GM12878 (cell line): ENCODE measurements at regions of chr1 and their contacts with region 1.

Region 1: GRCh38 chr1:198937231-198938031 is 298.6 kb downstream of the PTPRC start:
- DNase-seq: peak; percentile 91
- ATAC-seq: peak; percentile 85
- H3K4me3 ChIP-seq: peak overlapping the region; percentile 62
- H3K27ac ChIP-seq: peak overlapping the region; percentile 29
- H3K4me1 ChIP-seq: no peaks in the 10 kb centered on the region; the same call in 1 of the 2 replicates
- H3K27me3 ChIP-seq: no peaks in the 10 kb centered on the region
- CTCF ChIP-seq: no peak
- EP300 ChIP-seq: no peak
- POLR2A ChIP-seq: peak; percentile 87
- RAD21 ChIP-seq: no peak

Region 2: DNA sequence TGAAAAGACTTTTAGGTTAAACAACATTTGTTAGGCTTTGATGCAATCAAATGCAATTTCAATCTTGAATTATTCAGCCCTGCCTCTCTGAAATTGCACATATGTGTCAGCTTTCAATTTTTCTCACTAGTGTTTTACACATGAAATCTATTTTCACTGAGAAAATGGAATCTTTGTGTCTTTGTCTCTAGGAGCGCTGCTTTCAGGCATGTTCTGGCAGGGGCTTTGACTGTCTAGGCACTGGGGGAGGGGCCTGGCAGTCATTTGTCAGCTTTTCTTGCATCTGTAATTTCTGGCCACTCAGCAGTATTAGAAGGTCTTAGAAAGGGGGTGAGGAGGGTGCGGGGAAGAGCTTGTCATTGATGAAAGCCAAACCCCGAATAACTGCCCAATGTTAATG is 34.2 kb before region 1 on chr1:
- CTCF ChIA-PET with region 1: interaction called, 3 read pairs
- POLR2A ChIA-PET with region 1: interaction called, 3 read pairs
- RAD21 ChIA-PET with region 1: interaction called, 6 read pairs
- SMC1A ChIA-PET with region 1: interaction called, 10 read pairs
- in situ Hi-C with region 1: no loop called
- intact Hi-C with region 1: no loop called
- DNase-seq: no peak
- ATAC-seq: no peak; the same call in 2 of the 3 replicates
- H3K4me3 ChIP-seq: no peak overlapping the region
- H3K27ac ChIP-seq: no peak overlapping the region
- H3K4me1 ChIP-seq: peaks cover 2% of the 10 kb centered on the region; the same call in 1 of the 2 replicates
- H3K27me3 ChIP-seq: no peaks in the 10 kb centered on the region
- CTCF ChIP-seq: no peak
- EP300 ChIP-seq: no peak
- POLR2A ChIP-seq: no peak
- RAD21 ChIP-seq: no peak

Region 3: GRCh38 chr1:199009447-199009846 is 72.0 kb after region 1 on chr1:
- CTCF ChIA-PET with region 1: interaction called, 3 read pairs
- POLR2A ChIA-PET with region 1: interaction called, 5 read pairs
- RAD21 ChIA-PET with region 1: interaction called, 20 read pairs
- SMC1A ChIA-PET with region 1: interaction called, 22 read pairs
- in situ Hi-C with region 1: no loop called
- intact Hi-C with region 1: no loop called
- DNase-seq: peak; percentile 48
- ATAC-seq: peak; percentile 83
- H3K4me3 ChIP-seq: peak overlapping the region; percentile 13; the same call in 1 of the 2 replicates
- H3K27ac ChIP-seq: peak overlapping the region; percentile 8; the same call in 1 of the 2 replicates
- H3K4me1 ChIP-seq: peaks cover 11% of the 10 kb centered on the region
- H3K27me3 ChIP-seq: no peaks in the 10 kb centered on the region
- CTCF ChIP-seq: no peak
- EP300 ChIP-seq: peak; percentile 34 to 41; a peak in 1 of 4 replicates
- POLR2A ChIP-seq: no peak
- RAD21 ChIP-seq: peak; percentile 26; the same call in 1 of the 2 replicates

Region 4: DNA sequence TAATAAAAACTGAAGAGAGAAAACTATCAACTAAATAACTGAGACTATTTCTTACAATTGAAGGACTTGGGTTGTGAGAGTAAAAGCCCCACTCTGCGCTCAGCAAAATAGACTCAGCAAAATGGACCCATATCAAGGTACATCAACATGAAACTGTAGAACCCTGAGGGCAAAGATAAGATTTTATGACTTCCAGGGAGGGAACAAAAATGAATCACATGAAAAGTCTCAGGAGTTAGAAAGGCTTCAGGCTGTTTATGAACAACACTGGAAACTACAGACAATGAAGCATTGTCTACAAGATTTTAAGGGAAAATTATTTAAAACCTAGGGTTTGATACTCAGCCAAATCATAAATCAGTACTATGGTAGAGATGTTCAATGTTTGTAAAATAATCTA is 135.7 kb after region 1 on chr1:
- CTCF ChIA-PET with region 1: interaction called, 5 read pairs
- POLR2A ChIA-PET with region 1: interaction called, 3 read pairs
- RAD21 ChIA-PET with region 1: interaction called, 57 read pairs
- SMC1A ChIA-PET with region 1: interaction called, 29 read pairs
- in situ Hi-C with region 1: no loop called
- intact Hi-C with region 1: no loop called
- DNase-seq: no peak
- ATAC-seq: no peak
- H3K4me3 ChIP-seq: no peak overlapping the region
- H3K27ac ChIP-seq: no peak overlapping the region
- H3K4me1 ChIP-seq: peaks cover under 1% of the 10 kb centered on the region; the same call in 1 of the 2 replicates
- H3K27me3 ChIP-seq: no peaks in the 10 kb centered on the region
- CTCF ChIP-seq: no peak
- EP300 ChIP-seq: no peak
- POLR2A ChIP-seq: no peak
- RAD21 ChIP-seq: no peak

Region 5: DNA sequence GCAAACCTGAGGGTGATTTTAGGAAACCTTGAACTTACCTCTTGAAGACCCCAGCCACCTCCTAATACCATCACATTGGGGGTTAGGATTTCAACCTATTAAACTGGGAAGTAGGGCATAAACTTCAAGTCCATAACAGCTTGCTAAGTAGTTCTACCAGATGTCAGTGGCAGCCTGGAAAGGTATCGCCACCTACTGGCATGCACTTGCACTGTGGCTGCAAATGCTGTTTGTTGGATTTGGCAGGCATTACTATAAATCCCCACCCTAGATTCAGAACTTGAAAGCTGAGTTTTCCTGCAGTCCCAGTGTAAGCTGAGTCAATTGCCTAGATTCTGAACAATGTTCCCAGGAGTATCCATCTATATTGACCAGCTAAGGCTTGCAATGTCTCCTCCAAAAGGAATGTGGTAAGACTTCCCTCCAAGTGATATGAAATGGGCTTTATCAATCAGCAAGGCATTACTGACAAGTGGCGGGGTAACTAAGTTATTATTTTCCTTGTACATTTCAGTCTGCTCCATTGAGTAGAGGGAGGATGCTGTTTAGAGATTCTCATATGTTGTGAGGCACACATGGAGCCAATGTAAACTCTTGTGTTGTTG is 175.9 kb after region 1 on chr1:
- CTCF ChIA-PET with region 1: interaction called, 15 read pairs
- POLR2A ChIA-PET with region 1: interaction called, 3 read pairs
- RAD21 ChIA-PET with region 1: interaction called, 18 read pairs
- SMC1A ChIA-PET with region 1: interaction called, 34 read pairs
- in situ Hi-C with region 1: no loop called
- intact Hi-C with region 1: loop called (anchors 2 kb)
- DNase-seq: peak; percentile 43
- ATAC-seq: peak; percentile 92
- H3K4me3 ChIP-seq: no peak overlapping the region
- H3K27ac ChIP-seq: no peak overlapping the region
- H3K4me1 ChIP-seq: no peaks in the 10 kb centered on the region
- H3K27me3 ChIP-seq: no peaks in the 10 kb centered on the region
- CTCF ChIP-seq: peak; percentile 58 to 87 (median 77)
- EP300 ChIP-seq: no peak
- POLR2A ChIP-seq: no peak
- RAD21 ChIP-seq: peak; percentile 91

Region 6: DNA sequence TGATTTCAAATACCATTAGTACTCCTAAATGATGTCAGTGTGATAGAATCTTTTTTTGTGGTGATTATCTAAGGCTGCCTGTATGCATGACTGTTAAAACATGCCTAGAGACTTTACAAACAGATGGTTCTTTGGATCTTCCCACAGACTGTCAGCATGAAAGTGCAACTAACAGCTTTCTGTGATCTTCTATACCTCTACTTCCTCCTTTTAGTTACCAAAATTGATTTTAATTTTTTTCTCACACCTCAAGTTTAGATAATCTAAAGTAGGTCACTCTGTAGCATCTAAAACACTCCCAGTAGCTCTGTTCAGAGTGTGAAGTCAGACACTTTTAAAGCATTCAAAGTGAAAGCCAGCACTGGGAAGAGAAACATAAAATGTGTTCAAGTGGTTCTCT is 235.9 kb after region 1 on chr1:
- CTCF ChIA-PET with region 1: interaction called, 12 read pairs
- POLR2A ChIA-PET with region 1: interaction called, 3 read pairs
- RAD21 ChIA-PET with region 1: interaction called, 33 read pairs
- SMC1A ChIA-PET with region 1: interaction called, 34 read pairs
- in situ Hi-C with region 1: loop called (anchors 5 kb)
- intact Hi-C with region 1: loop called (anchors 5 kb)
- DNase-seq: peak; percentile 92
- ATAC-seq: peak; percentile 89
- H3K4me3 ChIP-seq: no peak overlapping the region
- H3K27ac ChIP-seq: peak overlapping the region; percentile 85
- H3K4me1 ChIP-seq: peaks cover 27% of the 10 kb centered on the region
- H3K27me3 ChIP-seq: no peaks in the 10 kb centered on the region
- CTCF ChIP-seq: no peak
- EP300 ChIP-seq: peak; percentile 94 to 95
- POLR2A ChIP-seq: no peak
- RAD21 ChIP-seq: peak; percentile 20; the same call in 1 of the 2 replicates